ENCODE measurements at regions of chr3 and their contacts with region 1.

Region 1: GRCh38 chr3:183591881-183592521 is 36.5 kb upstream of the KLHL6 start:
- DNase-seq: peak; percentile 96
- ATAC-seq: peak; percentile 89
- H3K4me3 ChIP-seq: no peak overlapping the region; the same call in 1 of the 2 replicates
- H3K27ac ChIP-seq: no peak overlapping the region
- H3K4me1 ChIP-seq: peaks cover 22% of the 10 kb centered on the region
- H3K27me3 ChIP-seq: peaks cover 0 to 16% of the 10 kb centered on the region in 2 experiments; a peak in 1 of 4 replicates
- CTCF ChIP-seq: peak; percentile 23 to 48 (median 37); a peak in 4 of 6 replicates
- EP300 ChIP-seq: peak; percentile 27 to 84; a peak in 3 of 4 replicates
- POLR2A ChIP-seq: no peak
- RAD21 ChIP-seq: peak; percentile 41; the same call in 1 of the 2 replicates

Region 2: DNA sequence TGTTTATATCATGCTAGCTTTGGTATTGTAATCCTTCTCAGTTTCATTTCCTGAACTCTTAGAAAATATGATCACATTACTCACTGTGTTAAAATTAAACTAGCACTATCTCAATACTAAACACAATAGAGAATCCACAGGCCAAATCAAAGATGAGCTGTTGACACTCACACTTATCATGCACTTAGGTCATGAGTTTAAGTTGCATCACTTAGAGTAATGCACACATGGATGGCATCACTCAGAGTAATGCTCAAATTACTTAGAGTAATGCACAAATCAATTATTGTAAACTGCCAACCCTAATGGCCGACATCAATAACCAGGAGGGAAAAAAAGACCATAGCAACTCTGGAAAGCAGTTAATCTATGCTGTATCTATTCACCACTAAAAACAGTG is 123.6 kb before region 1 on chr3:
- CTCF ChIA-PET with region 1: interaction called, 10 read pairs
- POLR2A ChIA-PET with region 1: interaction called, 4 read pairs
- RAD21 ChIA-PET with region 1: interaction called, 9 read pairs
- SMC1A ChIA-PET with region 1: interaction called, 19 read pairs
- in situ Hi-C with region 1: no loop called
- intact Hi-C with region 1: loop called (anchors 1 kb)
- DNase-seq: no peak
- ATAC-seq: no peak
- H3K4me3 ChIP-seq: no peak overlapping the region
- H3K27ac ChIP-seq: no peak overlapping the region
- H3K4me1 ChIP-seq: no peaks in the 10 kb centered on the region
- H3K27me3 ChIP-seq: no peaks in the 10 kb centered on the region
- CTCF ChIP-seq: no peak
- EP300 ChIP-seq: no peak
- POLR2A ChIP-seq: no peak
- RAD21 ChIP-seq: no peak

Region 3: GRCh38 chr3:183515968-183516851 is 75.8 kb before region 1 on chr3:
- CTCF ChIA-PET with region 1: interaction called, 10 read pairs
- POLR2A ChIA-PET with region 1: interaction called, 7 read pairs
- RAD21 ChIA-PET with region 1: interaction called, 8 read pairs
- SMC1A ChIA-PET with region 1: interaction called, 8 read pairs
- in situ Hi-C with region 1: no loop called
- intact Hi-C with region 1: no loop called
- DNase-seq: peak; percentile 77
- ATAC-seq: peak; percentile 61
- H3K4me3 ChIP-seq: no peak overlapping the region
- H3K27ac ChIP-seq: peak overlapping the region; percentile 7; the same call in 1 of the 2 replicates
- H3K4me1 ChIP-seq: peaks cover 43% of the 10 kb centered on the region
- H3K27me3 ChIP-seq: no peaks in the 10 kb centered on the region
- CTCF ChIP-seq: peak; percentile 15 to 21 (median 20); a peak in 3 of 6 replicates
- EP300 ChIP-seq: peak in 1 of 2 experiments; percentile 91; a peak in 2 of 4 replicates
- POLR2A ChIP-seq: peak; percentile 33; the same call in 1 of the 2 replicates
- RAD21 ChIP-seq: peak; percentile 32

Region 4: DNA sequence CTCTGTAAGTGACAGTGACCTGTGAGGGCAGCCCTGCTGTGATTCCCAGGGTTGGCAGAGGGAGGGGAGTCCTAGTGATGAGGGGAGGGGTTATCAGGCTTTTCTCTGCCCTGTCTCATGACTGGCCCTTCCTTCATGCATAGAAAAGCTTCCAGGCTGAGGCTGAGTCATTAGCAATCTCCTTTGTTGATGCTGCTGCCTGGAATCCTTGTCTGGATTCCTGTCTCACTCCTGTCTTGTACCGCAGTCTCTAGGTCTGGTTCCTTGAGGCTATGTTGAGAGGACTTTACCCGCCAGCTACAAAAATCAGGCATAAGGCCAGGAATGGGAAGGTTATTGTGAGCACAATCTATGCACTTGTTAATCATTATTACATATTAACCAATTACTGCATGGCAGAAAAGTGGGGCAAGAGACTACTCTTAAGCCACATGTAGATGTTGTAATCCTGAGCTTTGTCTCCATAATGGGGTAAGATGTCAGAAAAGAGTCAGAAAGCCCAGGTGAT is 43.7 kb before region 1 on chr3:
- CTCF ChIA-PET with region 1: interaction called, 30 read pairs
- POLR2A ChIA-PET with region 1: interaction called, 29 read pairs
- RAD21 ChIA-PET with region 1: interaction called, 48 read pairs
- SMC1A ChIA-PET with region 1: interaction called, 61 read pairs
- in situ Hi-C with region 1: no loop called
- intact Hi-C with region 1: no loop called
- DNase-seq: no peak
- ATAC-seq: no peak
- H3K4me3 ChIP-seq: no peak overlapping the region
- H3K27ac ChIP-seq: no peak overlapping the region
- H3K4me1 ChIP-seq: peaks cover 8% of the 10 kb centered on the region
- H3K27me3 ChIP-seq: no peaks in the 10 kb centered on the region; a peak in 1 of 4 replicates
- CTCF ChIP-seq: no peak
- EP300 ChIP-seq: no peak
- POLR2A ChIP-seq: no peak
- RAD21 ChIP-seq: no peak

Region 5: DNA sequence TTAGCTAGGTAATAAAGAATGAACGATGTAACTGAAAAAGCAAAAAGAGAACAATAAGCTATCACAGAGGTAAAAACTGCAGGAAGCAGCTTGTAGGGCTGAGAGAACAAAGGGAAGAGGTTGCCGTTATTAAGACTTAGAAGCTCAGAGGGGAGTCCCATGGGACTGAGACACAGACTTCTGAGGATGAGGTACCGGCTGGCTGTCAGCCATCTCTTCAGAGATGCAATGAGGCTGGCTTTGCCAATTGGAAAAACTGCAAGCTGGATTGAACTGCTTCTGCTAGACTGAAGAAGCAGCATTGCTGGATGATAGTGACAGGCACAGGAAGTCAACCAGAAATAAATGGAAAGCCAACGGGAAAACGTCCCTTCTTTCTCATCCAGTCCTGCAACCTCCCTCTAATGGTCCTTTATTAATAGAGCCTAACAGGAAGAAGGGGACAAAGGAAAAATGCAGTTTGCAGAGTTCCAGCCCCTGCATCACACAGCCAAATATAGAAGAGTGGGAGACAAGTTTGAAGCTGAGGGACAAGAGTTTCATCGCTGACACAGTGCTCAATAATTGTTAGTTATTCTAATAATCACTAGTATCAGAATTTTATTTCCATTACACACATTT is 15.4 kb before region 1 on chr3:
- CTCF ChIA-PET with region 1: interaction called, 115 read pairs
- POLR2A ChIA-PET with region 1: interaction called, 65 read pairs
- RAD21 ChIA-PET with region 1: interaction called, 139 read pairs
- SMC1A ChIA-PET with region 1: interaction called, 225 read pairs
- in situ Hi-C with region 1: no loop called
- intact Hi-C with region 1: no loop called
- DNase-seq: no peak
- ATAC-seq: no peak
- H3K4me3 ChIP-seq: no peak overlapping the region
- H3K27ac ChIP-seq: no peak overlapping the region
- H3K4me1 ChIP-seq: peaks cover 8% of the 10 kb centered on the region; the same call in 1 of the 2 replicates
- H3K27me3 ChIP-seq: peaks cover 0 to 21% of the 10 kb centered on the region in 2 experiments; a peak in 2 of 4 replicates
- CTCF ChIP-seq: no peak
- EP300 ChIP-seq: no peak
- POLR2A ChIP-seq: no peak
- RAD21 ChIP-seq: no peak

Region 6: DNA sequence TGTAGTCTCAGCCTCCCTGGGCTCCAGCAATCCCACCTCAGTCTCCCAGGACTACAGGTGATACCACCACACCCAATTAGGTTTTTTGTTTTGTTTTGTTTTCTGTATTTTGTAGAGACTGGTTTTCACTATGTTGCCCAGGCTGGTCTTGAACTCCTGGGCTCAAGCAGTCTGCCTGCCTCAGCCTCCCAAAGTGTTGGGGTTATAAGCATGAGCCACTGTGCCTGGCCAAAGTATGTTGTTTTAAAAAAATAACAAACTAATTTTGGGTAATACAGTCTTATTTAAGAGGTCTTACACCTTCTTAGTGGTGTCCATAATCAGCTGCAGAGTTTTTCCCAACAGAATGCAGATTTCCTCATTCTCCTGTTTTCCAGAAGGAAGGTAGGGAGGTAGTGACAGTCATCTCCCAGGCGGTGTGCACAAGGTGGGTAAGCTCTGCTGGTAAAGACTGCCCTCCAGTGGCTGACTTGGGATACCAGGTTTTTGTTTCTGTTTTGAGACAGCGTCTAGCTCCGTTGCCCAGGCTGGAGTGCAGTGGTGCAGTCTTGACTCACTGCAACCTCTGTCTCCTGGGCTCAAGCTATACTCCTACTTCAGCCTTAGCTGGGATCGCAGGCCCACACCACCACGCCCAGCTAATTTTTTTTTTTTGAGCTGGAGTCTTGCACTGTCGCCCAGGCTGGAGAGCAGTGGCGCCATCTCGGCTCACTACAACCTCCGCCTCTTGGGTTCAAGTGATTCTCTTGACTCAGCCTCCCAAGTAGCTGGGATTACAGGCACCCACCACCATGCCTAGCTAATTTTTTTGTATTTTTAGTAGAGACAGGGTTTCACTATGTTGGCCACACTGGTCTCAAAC is 175.0 kb after region 1 on chr3:
- CTCF ChIA-PET with region 1: interaction called, 3 read pairs
- POLR2A ChIA-PET with region 1: interaction called, 4 read pairs
- RAD21 ChIA-PET with region 1: interaction called, 11 read pairs
- SMC1A ChIA-PET with region 1: interaction called, 6 read pairs
- in situ Hi-C with region 1: no loop called
- intact Hi-C with region 1: no loop called
- DNase-seq: no peak
- ATAC-seq: peak; percentile 99
- H3K4me3 ChIP-seq: no peak overlapping the region
- H3K27ac ChIP-seq: no peak overlapping the region
- H3K4me1 ChIP-seq: no peaks in the 10 kb centered on the region
- H3K27me3 ChIP-seq: no peaks in the 10 kb centered on the region
- CTCF ChIP-seq: peak; percentile 67 to 82 (median 79)
- EP300 ChIP-seq: no peak
- POLR2A ChIP-seq: no peak
- RAD21 ChIP-seq: peak; percentile 89

Measured in GM12878 (cell line).